Right cardiac atrium (tissue), 5 donors: ENCODE measurements at regions of chr4 and their contacts with region 1.

Region 1: DNA sequence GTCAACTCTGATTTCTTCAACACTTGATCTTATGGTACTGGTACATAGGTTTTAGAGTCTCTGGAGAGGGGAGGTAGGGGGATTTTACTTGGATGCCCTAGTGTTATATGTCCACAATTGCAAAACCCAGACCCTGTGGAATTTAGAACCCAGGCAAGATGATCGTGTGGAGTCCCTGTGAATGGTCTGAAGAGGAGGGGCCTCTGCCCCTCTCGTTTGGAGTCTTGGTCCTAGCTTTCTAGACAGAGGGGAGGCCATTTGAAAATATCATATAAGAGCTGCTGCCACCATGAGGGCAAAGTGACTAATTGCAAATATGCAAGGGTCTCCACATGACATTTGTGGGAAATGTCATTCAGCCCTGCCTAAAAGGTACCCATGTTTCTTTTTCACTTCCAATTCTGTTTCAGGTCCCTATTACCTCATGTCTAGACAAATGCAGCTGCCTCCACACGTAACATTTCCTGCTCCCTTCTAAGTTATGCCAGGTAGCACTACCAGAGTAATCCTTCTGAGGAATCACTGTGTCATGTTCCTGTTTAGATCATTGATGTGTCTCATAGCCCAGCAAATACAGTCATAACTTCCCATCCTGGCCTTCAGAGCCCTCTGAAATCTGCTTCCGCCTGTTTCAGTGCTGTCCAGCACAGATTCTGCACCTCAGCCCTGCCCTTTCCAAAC is 126.8 kb downstream of the KLHL8 start:
- DNase-seq: no peak
- ATAC-seq: peak; percentile 69 to 77
- H3K4me3 ChIP-seq: no peak overlapping the region
- H3K27ac ChIP-seq: peak overlapping the region; percentile 12
- H3K4me1 ChIP-seq: peaks cover 5% of the 10 kb centered on the region
- H3K27me3 ChIP-seq: no peaks in the 10 kb centered on the region

Region 2: DNA sequence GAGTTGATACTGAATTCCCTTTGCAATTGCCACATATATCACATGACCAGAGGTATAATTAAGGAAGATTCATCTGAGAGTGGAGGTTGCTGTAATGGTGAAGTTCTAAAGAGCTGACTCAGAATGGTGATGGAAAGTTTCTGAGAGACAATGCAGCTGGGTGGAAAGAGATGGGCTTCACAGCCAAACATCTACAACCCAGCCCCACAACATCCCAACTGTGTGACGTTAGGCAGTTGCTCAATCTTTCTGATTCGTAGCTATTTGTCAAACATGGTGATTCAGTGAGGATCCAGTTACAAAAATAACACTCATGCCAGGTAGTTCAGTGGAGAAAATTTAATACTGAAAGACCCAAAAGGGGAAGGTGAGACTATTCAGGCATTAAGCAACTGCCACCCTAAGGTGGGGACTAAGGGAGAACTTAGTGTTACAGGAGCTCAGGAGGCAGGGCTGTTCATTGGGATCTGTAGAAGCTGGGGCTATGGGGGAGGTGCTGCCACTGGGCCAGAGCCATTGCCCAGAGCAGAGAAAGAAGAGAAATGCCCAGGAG is 165.7 kb before region 1 on chr4:
- intact Hi-C with region 1: loop called (anchors 5 kb)
- DNase-seq: peak in 1 of 3 donors; percentile 50
- ATAC-seq: peak; percentile 61 to 86
- H3K4me3 ChIP-seq: no peak overlapping the region
- H3K27ac ChIP-seq: no peak overlapping the region
- H3K4me1 ChIP-seq: peaks cover 2% of the 10 kb centered on the region
- H3K27me3 ChIP-seq: no peaks in the 10 kb centered on the region

Region 3: GRCh38 chr4:86934771-86935565 is 158.6 kb before region 1 on chr4 and contains the start of gene AFF1:
- intact Hi-C with region 1: loop called in 1 of 4 experiments (anchors 5 kb)
- DNase-seq: peak; percentile 95 to 98 (median 97)
- ATAC-seq: peak; percentile 94 to 96
- H3K4me3 ChIP-seq: peak within 1 kb of the TSS; percentile 85
- H3K27ac ChIP-seq: peak within 1 kb of the TSS; percentile 91
- H3K4me1 ChIP-seq: peaks cover 5% of the 10 kb centered on the region
- H3K27me3 ChIP-seq: no peaks in the 10 kb centered on the region
- total RNA-seq, gene AFF1: 76.6 to 86.6 (median 84.1) TPM

Region 4: DNA sequence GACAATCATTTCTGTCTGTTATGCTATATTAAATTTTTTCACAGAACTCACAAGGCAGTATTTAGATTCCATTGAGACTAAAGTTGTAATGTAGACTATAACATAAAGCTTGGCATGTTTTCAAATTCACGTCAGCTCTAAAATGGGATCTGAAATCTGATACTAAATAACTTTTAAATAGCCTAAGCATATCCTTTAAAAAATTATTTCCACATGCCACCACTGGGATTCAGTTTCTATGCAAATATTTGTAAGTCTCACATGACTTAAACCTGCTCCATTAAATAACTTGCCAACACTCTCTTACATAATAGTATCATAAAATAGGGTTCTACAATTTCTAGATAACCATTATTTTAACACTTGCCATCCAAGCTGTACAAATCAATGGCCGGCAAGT is 94.5 kb after region 1 on chr4:
- intact Hi-C with region 1: no loop called
- DNase-seq: no peak
- ATAC-seq: no peak
- H3K4me3 ChIP-seq: no peak overlapping the region
- H3K27ac ChIP-seq: no peak overlapping the region
- H3K4me1 ChIP-seq: no peaks in the 10 kb centered on the region
- H3K27me3 ChIP-seq: no peaks in the 10 kb centered on the region